HEK293T (cell line): ENCODE measurements at regions of chr5 and their contacts with region 1.

Region 1: GRCh38 chr5:38441453-38442246 is 114.8 kb downstream of the LIFR start:
- DNase-seq: peak; percentile 87

Region 2: DNA sequence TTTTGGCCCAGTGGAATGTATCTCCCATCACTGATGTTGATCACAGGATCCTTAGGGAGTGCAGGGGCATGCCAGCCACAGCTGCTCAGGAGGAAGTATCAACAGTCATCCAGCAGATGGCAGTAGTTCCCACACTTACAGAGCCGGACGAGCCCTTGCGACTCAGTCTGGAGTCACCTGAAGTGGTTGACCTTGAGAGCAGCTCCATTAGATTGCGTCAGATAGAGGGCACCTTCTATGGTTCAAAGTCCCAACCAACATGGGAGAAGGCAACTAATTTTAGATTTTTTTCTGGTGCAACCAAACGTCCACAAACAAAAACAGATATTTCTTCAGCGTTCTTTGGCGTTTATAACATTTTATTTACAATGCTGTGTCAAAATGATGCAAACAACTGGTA is 58.8 kb before region 1 on chr5:
- CTCF ChIA-PET with region 1: interaction called, 13 read pairs
- POLR2A ChIA-PET with region 1: no interaction called
- DNase-seq: peak; percentile 82

Region 3: DNA sequence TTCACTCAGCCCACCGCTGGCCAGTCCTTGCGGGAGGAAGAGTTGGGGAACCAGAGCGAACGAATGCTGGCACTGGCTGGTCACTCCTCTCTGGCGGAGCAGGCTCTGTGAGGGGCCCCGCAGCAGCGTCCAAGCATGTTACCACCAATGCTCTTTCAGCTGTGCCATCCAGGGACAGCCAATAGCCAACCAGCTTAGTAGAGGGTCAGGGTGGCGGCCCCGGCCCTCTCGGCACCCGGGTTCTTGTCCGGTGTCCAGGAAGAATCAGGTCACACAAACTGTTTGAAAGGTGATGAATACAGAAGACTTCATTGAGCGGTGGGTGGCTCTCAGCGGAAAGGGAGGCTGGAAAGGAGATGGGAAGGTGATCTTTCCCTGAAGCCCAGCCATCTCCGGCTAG is 48.0 kb before region 1 on chr5:
- CTCF ChIA-PET with region 1: no interaction called
- POLR2A ChIA-PET with region 1: no interaction called
- DNase-seq: no peak

Region 4: DNA sequence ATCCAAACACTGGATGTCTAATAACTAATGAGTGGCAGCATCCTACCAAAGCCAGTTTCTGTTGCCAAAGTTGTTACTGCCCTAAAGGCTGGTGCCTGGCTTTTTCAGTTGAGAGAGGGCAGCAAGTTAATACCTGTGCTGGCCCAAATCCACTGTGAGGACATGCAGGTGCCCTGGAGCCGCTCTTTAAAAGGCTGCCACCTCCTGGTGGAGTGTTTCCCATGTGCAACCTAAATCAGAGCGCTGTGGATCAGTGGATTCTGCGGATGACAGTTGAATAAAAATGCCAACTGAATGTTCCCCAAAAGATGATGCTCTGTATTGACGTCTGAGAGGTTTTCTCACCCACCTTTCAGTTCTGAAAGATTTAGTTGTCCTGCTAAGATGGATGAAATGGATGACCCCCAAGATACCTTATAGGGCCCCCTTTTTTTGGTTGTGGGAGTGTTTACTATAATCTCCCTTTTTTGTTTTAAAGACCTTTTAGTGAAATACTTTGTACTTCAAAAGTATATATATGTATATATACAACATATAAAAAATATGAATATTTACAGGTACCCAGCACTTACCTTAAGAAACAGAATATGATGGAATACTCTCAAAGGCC is 36.9 kb before region 1 on chr5:
- CTCF ChIA-PET with region 1: no interaction called
- POLR2A ChIA-PET with region 1: no interaction called
- DNase-seq: peak; percentile 22

Region 5: GRCh38 chr5:38420691-38421390 is 20.8 kb before region 1 on chr5:
- CTCF ChIA-PET with region 1: interaction called, 15 read pairs
- POLR2A ChIA-PET with region 1: no interaction called
- DNase-seq: peak; percentile 73

Region 6: DNA sequence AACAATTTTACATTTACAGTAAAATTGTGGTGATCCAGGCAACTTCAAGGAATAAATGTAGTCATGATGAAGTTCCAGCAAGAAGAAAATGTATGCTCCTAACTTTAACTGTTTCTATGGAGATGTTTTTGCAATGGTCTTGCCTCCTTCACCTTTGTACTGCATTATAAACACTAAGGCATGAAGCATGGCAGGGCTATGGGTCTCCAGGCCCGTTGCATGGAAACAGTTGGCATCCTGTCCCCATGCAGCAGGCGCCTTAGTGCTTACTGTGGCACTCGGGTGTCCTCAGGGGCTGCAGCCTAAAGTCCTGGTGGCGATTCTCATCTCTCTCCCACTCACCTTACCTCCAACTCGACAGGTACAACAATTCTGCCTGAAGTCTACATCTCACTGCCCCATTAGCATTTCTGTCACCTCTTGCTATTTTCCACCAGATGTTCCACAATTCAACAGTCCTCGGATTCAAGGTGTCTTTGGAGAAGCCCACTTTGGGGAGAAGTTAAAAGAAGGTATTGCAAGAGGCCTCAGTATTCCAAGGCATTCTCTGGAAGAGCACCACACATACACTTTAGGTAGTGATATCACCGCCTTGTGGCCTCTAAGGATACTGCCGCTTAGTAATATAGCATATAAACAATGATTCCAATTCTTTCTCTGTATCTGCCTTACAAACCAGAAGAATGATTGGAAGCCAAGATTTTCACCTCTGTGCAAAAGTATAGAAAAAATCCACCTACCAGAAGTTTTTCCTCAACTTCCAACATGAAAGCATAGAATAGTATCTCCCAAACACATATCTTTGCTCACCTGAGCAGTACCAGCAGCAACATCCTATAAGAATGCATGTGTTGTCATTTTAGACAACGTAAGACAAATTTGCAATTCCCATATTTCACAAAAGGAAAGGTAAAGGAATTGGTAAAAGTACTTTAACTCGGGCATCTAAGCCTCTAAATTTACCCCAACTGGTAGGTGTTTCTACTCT is 109.7 kb after region 1 on chr5:
- CTCF ChIA-PET with region 1: interaction called, 13 read pairs
- POLR2A ChIA-PET with region 1: interaction called, 4 read pairs
- DNase-seq: peak; percentile 49

Region 7: DNA sequence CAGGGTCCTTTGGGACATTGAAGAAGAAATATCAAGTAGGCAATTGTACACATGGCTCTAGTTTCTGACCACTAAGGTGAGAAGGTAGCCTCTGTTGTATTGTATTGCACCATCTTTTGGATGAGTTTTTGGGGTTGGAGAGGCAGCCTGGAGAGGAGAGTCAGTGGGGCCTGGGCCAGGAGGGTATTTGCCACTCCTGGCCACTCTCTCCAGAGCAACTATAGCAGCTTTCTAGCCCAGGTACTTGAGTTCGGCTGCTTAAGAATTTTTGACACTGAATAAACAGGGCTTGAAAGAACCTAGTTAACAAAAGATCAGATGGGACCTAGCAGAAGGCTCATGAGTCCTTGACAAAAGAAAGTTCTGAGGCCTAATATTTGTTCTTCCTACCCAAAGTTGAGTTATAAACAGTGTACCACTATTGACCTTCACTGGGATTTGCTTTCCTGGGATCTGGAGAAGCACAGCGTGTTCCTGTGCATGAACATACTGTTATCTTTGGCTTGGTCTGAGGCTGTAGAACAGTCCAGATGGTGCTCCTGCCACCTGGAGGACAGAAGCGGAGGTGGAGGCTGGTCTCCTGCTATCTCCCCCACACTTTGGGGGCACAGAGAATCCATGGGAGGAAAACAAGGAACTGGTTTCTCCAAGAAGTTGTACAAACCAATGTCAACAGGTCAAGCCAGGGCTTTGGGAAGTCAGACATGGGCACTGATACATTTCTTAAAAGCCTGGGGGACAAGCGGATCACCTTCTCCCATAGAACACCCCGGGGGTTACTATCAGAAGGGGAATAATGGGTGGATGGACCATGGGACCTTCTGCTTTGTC is 225.2 kb after region 1 on chr5:
- CTCF ChIA-PET with region 1: interaction called, 13 read pairs
- POLR2A ChIA-PET with region 1: interaction called, 4 read pairs
- DNase-seq: peak; percentile 47

Region 8: DNA sequence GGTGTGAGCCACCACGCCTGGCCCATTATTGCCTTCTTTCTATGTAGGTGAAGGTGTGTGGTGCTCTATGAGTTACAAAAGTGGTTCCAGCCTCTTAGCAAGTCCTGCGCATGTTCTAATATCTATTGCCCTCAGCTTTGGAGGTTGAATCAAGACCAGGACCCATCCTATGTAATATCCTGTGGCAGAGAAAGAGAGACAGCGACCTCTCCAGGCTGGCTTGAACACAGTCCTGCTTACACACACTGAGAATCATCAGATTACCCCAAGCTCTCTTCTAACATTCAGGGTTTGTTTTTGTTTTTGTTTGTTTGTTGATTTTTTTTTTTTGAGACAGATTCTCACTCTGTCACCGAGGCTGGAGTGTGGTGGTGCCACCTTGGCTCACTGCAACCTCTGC is 309.5 kb after region 1 on chr5:
- CTCF ChIA-PET with region 1: interaction called, 16 read pairs
- POLR2A ChIA-PET with region 1: no interaction called
- DNase-seq: peak; percentile 19

Region 9: DNA sequence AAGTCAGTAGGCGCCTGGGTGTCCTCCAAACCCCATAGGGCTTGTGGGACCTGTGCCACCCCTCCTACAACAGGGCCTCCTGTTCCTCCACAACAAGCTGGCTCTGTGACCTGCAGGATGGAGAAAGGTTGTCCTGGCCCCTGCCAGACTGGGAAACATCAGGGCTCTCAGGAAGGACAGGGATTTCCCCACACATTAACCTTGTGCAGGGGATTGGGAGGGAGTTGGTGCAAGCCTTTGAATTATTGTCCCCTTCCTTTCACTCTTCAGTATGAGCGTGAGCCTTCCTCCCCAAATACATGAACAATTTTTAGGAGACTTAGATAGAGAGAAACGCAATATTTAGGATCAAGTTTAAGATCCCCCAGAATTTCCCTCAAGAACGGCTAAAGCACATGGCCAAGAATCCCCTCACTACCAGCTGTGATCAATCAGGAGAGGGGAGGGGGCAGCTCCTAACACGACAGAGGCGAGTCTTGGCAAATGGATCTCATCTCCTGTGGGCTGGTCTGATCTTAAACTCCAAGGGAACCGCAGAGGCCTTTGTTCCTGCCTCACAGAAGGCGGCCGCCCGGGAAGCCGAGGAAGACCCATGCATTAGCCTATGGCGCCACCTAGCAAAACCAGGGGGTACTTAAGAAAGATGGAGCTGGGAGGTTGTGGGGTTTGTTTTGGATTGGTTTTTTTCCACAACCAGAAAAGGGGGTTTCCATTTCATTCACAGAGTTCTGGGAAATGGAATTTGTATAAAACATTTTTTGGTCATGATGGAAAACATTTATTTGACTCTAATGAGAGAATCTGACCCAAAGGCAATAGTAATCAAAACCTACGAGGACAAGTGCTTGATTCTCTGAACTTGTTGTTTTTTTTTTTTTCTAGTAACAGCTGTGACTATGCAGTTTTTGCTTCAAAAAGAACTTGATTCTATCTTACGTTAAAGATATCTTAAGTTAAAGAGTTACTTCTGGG is 368.0 kb after region 1 on chr5:
- CTCF ChIA-PET with region 1: interaction called, 77 read pairs
- POLR2A ChIA-PET with region 1: no interaction called
- DNase-seq: peak; percentile 77